CD8-positive, alpha-beta memory T cell (primary cell): ENCODE measurements at regions of chr2 and their contacts with region 1.

Region 1: GRCh38 chr2:10072656-10073480 is 7.3 kb downstream of the CYS1 start:
- DNase-seq: peak; percentile 62 to 83 (median 72)
- H3K4me3 ChIP-seq: no peak overlapping the region
- H3K4me3 Mint-ChIP-seq: no peak overlapping the region
- H3K27ac ChIP-seq: no peak overlapping the region
- H3K27ac Mint-ChIP-seq: no peak overlapping the region
- H3K4me1 ChIP-seq: no peaks in the 10 kb centered on the region
- H3K4me1 Mint-ChIP-seq: peaks cover 3 to 6% (median 5%) of the 10 kb centered on the region in 3 donors
- H3K27me3 ChIP-seq: peaks cover 14% of the 10 kb centered on the region
- H3K27me3 Mint-ChIP-seq: peaks cover 21 to 53% of the 10 kb centered on the region in 2 donors

Region 2: GRCh38 chr2:9984217-9984739 is 88.6 kb before region 1 on chr2:
- CTCF ChIA-PET with region 1: interaction called, 17 read pairs
- POLR2A ChIA-PET with region 1: no interaction called
- DNase-seq: peak in 2 of 5 donors; percentile 51 to 54
- H3K4me3 ChIP-seq: no peak overlapping the region
- H3K4me3 Mint-ChIP-seq: no peak overlapping the region
- H3K27ac ChIP-seq: no peak overlapping the region
- H3K27ac Mint-ChIP-seq: no peak overlapping the region
- H3K4me1 ChIP-seq: peaks cover 7% of the 10 kb centered on the region
- H3K4me1 Mint-ChIP-seq: peaks cover 8 to 16% (median 10%) of the 10 kb centered on the region in 3 donors
- H3K27me3 ChIP-seq: no peaks in the 10 kb centered on the region
- H3K27me3 Mint-ChIP-seq: peaks cover 3 to 8% of the 10 kb centered on the region in 2 donors

Region 3: DNA sequence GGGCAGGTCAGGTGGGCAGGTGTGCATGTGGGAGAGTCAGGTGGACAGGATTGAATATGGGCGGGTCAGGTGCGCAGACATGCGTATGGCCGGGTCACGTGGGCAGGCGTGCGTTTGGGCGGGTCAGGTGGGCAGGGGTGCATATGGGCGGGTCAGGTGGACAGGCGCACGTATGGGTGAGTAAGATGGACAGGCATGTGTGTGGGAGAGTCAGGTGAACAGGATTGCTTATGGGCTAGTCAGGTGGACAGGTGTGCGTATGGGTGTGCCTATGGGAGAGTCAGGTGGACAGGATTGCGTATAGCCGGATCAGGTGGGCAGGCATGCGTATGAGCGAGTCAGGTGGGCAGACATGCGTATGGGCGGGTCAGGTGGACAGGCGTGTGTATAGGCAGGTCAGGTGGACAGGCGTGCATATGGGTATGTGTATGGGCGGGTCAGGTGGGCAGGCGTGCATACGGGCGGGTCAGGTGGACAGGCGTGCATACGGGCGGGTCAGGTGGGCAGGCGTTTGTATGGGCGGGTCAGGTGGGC is 59.9 kb before region 1 on chr2:
- CTCF ChIA-PET with region 1: no interaction called
- POLR2A ChIA-PET with region 1: no interaction called
- DNase-seq: no peak
- H3K4me3 ChIP-seq: no peak overlapping the region
- H3K4me3 Mint-ChIP-seq: no peak overlapping the region
- H3K27ac ChIP-seq: no peak overlapping the region
- H3K27ac Mint-ChIP-seq: no peak overlapping the region
- H3K4me1 ChIP-seq: no peaks in the 10 kb centered on the region
- H3K4me1 Mint-ChIP-seq: no peaks in the 10 kb centered on the region
- H3K27me3 ChIP-seq: no peaks in the 10 kb centered on the region
- H3K27me3 Mint-ChIP-seq: peaks cover 7 to 26% of the 10 kb centered on the region in 2 donors

Region 4: DNA sequence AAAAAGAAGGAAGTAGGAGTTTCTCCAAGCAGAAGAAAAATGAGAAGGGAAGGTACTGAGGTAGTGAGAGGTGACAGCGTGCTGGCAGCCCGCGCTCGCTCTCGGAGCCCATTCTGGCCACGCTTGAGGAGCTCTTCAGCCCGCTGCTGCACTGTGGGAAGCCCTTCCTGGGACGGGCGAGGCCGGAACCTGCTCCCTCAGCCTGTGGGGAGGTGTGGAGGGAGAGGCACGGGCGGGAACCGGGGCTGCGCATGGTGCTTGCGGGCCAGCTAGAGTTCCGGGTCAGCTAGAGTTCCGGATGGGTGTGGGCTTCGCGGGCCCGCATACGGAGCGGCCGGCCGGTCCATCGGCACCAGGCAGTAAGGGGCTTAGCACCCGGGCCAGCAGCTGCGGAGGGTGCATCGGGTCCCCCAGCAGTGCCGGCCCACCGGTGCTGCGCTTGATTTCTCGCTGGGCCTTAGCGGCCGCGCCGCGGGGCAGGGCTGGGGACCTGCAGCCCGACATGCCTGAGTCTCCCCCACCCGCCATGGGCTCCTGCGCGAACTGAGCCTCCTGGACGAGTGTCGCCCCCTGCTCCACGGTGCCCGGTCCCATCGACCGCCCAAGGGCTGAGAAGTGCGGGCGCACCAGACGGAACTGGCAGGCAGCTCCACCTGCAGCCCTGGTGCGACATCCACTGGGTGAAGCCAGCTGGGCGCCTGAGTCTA is 18.5 kb after region 1 on chr2:
- CTCF ChIA-PET with region 1: interaction called, 38 read pairs
- POLR2A ChIA-PET with region 1: no interaction called
- DNase-seq: peak in 1 of 5 donors; percentile 10
- H3K4me3 ChIP-seq: no peak overlapping the region
- H3K4me3 Mint-ChIP-seq: peak overlapping the region; percentile 43 to 75 (median 70)
- H3K27ac ChIP-seq: no peak overlapping the region
- H3K27ac Mint-ChIP-seq: no peak overlapping the region
- H3K4me1 ChIP-seq: no peaks in the 10 kb centered on the region
- H3K4me1 Mint-ChIP-seq: peaks cover 4 to 5% (median 5%) of the 10 kb centered on the region in 3 donors
- H3K27me3 ChIP-seq: peaks cover 22% of the 10 kb centered on the region
- H3K27me3 Mint-ChIP-seq: peaks cover 50 to 81% of the 10 kb centered on the region in 2 donors

Region 5: DNA sequence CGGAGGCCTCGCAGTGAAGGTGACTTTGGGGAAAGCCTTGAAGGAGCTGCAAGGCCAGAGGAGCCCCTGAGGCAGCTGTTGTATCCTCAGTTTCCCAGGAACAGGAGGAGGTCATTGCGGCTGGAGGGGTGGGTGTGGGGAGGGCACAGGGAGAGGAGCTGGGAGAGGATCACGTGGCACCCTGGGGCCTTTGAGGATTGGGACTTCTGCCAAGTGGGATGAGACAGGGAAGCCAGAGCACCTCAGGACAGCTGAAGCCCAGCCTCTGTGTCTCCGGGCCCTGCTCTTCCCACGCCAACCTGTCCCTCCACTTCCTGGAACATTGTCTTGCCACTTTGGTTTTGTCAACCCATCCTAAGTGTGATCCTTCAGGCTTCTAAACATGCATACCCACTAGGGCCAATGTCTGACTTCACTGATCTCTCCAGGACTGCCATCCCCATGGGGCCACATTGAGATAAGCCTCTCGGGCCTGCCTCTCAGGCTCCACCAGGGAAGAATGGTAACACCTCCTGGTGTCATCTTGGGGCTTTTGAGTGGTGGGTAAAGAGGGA is 30.4 kb after region 1 on chr2:
- CTCF ChIA-PET with region 1: interaction called, 38 read pairs
- POLR2A ChIA-PET with region 1: no interaction called
- DNase-seq: no peak
- H3K4me3 ChIP-seq: no peak overlapping the region
- H3K4me3 Mint-ChIP-seq: peak overlapping the region in 1 of 7 donors; percentile 72
- H3K27ac ChIP-seq: no peak overlapping the region
- H3K27ac Mint-ChIP-seq: no peak overlapping the region
- H3K4me1 ChIP-seq: no peaks in the 10 kb centered on the region
- H3K4me1 Mint-ChIP-seq: no peaks in the 10 kb centered on the region
- H3K27me3 ChIP-seq: no peaks in the 10 kb centered on the region
- H3K27me3 Mint-ChIP-seq: peaks cover 4 to 5% of the 10 kb centered on the region in 2 donors

Region 6: DNA sequence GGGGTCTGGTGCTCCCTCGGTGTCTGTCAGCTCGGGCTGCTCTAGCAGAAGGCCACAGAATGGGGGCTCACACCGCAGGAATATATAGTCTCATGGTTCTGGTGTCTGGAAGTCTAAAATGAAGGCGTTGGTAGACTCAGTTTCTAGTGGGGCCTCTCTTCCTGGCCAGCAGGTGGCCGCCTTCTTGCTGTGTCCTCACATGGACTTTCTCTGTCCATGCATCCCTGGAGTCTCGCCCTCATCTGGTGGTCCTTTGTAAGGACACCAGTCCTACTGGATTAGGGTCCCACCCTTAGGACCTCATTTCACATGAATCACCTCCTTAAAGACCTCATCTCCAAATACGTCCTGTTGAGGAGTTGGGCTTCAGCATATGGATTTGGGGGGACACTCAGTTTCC is 115.3 kb after region 1 on chr2:
- CTCF ChIA-PET with region 1: no interaction called
- POLR2A ChIA-PET with region 1: no interaction called
- DNase-seq: no peak
- H3K4me3 ChIP-seq: no peak overlapping the region
- H3K4me3 Mint-ChIP-seq: no peak overlapping the region
- H3K27ac ChIP-seq: no peak overlapping the region
- H3K27ac Mint-ChIP-seq: peak overlapping the region in 1 of 8 donors; percentile 70
- H3K4me1 ChIP-seq: no peaks in the 10 kb centered on the region
- H3K4me1 Mint-ChIP-seq: no peaks in the 10 kb centered on the region
- H3K27me3 ChIP-seq: no peaks in the 10 kb centered on the region
- H3K27me3 Mint-ChIP-seq: peaks cover 0 to 3% of the 10 kb centered on the region in 2 donors

Region 7: DNA sequence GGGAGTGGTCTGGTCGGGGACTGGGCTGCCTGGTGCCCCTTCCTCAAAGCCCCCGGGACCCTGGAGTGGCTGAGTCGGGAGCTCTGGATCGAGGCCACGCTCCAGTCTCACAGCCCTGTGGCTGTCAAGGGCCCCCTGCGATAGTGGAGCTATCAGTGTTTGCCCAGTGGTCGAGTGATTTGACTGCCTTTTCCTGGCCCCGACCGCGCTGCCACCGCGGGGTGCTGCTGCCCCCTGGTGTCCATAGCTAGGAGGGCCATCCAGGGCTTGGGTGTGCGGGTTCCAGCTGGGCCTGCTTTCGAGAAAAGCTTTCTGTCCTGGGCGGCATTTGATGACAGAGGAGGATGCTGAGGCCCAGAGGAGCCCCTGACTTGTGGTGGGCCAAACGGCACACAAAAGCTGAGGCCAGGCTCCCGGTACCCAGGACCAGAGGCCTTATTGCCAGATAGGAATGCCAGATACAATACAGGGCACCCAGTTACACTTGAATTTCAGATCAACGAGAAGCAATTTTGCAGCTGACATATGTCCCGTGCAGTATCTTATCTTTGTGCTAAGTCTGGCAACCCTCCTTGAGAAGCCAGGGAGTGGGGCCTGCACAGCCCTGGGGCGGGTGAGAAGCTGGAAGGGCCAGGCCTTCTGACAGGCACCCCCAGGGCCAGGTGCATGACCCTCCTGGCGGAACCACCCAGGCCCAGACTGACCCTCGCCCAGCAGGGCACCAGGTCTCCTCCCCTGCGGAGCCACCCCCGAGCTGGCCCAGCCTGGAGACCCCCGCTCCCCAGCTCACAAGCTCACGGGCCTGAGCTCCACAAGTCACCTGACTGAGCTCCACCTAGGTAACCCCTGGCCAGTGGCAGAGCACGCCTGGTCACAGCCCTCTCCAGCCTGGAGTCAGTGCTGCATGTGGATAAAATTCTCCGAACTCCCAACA is 362.3 kb after region 1 on chr2:
- CTCF ChIA-PET with region 1: interaction called, 106 read pairs
- POLR2A ChIA-PET with region 1: interaction called, 6 read pairs
- DNase-seq: peak; percentile 54 to 76 (median 67)
- H3K4me3 ChIP-seq: no peak overlapping the region
- H3K4me3 Mint-ChIP-seq: peak overlapping the region in 4 of 7 donors; percentile 20 to 55 (median 44)
- H3K27ac ChIP-seq: no peak overlapping the region
- H3K27ac Mint-ChIP-seq: peak overlapping the region in 2 of 8 donors; percentile 61 to 70
- H3K4me1 ChIP-seq: peaks cover 7% of the 10 kb centered on the region
- H3K4me1 Mint-ChIP-seq: peaks cover 10 to 22% (median 11%) of the 10 kb centered on the region in 3 donors
- H3K27me3 ChIP-seq: no peaks in the 10 kb centered on the region
- H3K27me3 Mint-ChIP-seq: peaks cover 0 to 15% of the 10 kb centered on the region in 2 donors